ENCODE measurements at regions of chr1 and their contacts with region 1.

Region 1: DNA sequence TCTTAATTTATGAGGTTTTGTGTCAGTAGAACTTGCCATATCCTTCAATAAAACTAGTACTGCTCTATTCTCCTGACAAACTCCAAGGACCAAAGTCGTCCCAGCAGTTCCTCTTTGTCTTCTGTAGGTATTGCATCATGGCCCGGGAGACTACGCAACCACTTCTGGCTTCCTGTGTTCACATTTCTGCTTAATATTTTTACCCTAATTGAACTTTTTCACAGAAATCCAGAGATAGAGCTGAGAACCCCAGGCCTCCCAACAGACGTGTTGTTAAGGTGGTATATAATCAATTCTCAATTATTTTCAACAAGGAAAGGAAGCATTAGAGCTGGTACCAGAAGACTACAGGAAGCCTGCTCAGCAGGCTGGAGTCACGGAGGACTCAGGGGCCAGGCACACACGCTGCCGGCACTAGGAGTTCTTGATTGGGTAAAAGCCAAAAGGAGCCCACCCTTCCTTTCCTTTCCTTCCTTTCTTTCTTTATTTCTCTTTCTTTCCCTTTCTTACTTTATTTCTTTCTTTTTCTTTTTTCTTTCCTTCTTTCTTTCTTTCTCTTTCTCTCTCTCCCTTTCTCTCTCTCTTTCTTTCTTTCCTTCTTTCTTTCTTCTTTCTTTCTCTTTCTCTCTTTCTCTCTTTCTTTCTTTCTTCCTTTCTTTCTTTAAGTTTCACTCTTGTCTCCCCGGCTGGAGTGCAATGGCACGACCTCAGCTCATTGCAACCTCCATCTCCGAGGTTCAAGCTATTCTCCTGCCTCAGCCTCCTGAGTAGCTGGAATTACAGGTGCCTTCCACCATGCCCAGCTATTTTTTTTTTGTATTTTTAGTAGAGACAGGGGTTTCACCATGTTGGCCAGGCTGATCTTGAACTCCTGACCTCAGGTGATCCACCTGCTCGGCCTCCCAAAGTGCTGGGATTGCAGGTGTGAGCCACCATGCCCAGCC is 173.7 kb downstream of the ZBTB18 start:
- DNase-seq: peak in 3 of 14 experiments; percentile 16 to 56 (median 55)
- ATAC-seq: no peak
- H3K4me3 ChIP-seq: no peak overlapping the region
- H3K4me3 Mint-ChIP-seq: no peak overlapping the region
- H3K27ac ChIP-seq: no peak overlapping the region
- H3K27ac Mint-ChIP-seq: no peak overlapping the region
- H3K4me1 ChIP-seq: no peaks in the 10 kb centered on the region
- H3K4me1 Mint-ChIP-seq: no peaks in the 10 kb centered on the region
- H3K27me3 ChIP-seq: no peaks in the 10 kb centered on the region
- H3K27me3 Mint-ChIP-seq: no peaks in the 10 kb centered on the region
- CTCF ChIP-seq: no peak

Region 2: GRCh38 chr1:244171241-244171985 is 53.3 kb before region 1 on chr1:
- CTCF ChIA-PET with region 1: no interaction called
- POLR2A ChIA-PET with region 1: no interaction called
- intact Hi-C with region 1: loop called in 1 of 2 experiments (anchors 5 kb)
- DNase-seq: no peak
- ATAC-seq: no peak
- H3K4me3 ChIP-seq: no peak overlapping the region
- H3K4me3 Mint-ChIP-seq: no peak overlapping the region
- H3K27ac ChIP-seq: no peak overlapping the region
- H3K27ac Mint-ChIP-seq: no peak overlapping the region
- H3K4me1 ChIP-seq: no peaks in the 10 kb centered on the region
- H3K4me1 Mint-ChIP-seq: no peaks in the 10 kb centered on the region
- H3K27me3 ChIP-seq: no peaks in the 10 kb centered on the region
- H3K27me3 Mint-ChIP-seq: no peaks in the 10 kb centered on the region
- CTCF ChIP-seq: no peak